ENCODE measurements at regions of chr1 and their contacts with region 1.

Region 1: DNA sequence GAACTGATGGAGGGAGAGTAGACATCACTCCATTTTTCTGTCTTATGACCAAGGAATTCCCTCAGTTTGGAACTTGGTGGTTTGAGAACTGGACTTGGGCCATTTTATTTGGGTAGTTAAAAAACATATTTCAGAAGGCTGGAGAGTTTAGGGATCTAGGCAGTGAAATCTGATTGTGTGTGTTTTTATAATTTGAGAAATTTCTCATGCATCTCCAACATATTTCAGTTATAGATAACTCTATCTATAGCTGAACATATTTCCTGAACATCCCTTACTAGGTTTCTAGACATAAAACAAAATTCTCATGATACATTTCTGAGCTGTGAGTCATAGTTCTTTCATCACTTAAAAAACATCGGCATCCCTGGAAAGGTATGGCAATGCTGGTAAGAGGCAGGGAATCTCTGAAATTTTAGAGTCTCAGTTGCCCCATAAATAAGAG is 102.7 kb downstream of the FASLG start:
- DNase-seq: peak; percentile 6

Region 2: GRCh38 chr1:172969611-172970010 is 208.0 kb after region 1 on chr1:
- in situ Hi-C with region 1: no loop called
- DNase-seq: no peak

Region 3: DNA sequence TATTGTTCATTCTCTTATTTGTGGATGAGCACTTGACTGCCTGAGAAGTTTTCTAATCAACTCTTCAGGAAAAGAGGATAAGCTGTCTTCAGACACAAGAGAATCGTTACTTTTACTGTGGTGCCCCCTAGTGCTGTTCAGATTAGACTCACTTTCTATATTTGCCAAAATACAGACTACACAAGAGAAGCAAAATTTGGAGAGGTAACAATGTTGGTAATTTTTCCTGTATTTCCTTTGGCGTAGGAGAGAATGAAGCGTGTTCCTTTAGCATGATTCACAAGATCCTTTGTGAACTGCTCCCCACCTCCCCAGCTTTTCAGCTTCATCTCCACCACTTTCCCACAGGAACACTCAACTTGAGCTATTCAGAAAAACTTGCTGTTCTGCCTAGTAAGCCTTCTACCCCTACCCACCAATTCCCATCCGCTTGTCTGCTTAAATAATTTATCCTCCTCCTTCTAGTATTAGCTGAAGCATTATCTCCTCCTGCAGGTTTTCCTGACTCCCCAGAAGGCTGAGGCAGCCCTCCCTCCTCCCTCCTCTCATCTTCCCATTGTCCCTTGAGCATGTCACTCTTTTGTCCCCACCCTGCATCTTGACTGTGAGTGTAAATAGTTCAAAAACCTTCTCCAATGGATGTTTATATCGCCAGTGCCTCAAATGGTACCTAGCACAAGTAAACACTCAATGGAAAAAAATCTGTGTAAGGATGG is 441.0 kb after region 1 on chr1:
- in situ Hi-C with region 1: loop called (anchors 25 kb)
- DNase-seq: peak; percentile 73